ENCODE measurements at regions of chr12 and their contacts with region 1.

Region 1: GRCh38 chr12:107992870-107993451 is 136.1 kb upstream of the WSCD2 start:
- DNase-seq: peak; percentile 27 to 69
- ATAC-seq: peak; percentile 96 to 100
- H3K4me3 ChIP-seq: no peak overlapping the region
- H3K27ac ChIP-seq: no peak overlapping the region
- H3K4me1 ChIP-seq: no peaks in the 10 kb centered on the region
- CTCF ChIP-seq: peak; percentile 20; the same call in 2 of the 3 replicates
- EP300 ChIP-seq: no peak
- POLR2A ChIP-seq: no peak
- RAD21 ChIP-seq: peak in 1 of 2 experiments; percentile 45; a peak in 3 of 5 replicates

Region 2: GRCh38 chr12:107163413-107163812 is 829.5 kb before region 1 on chr12:
- CTCF ChIA-PET with region 1: no interaction called
- POLR2A ChIA-PET with region 1: no interaction called
- DNase-seq: no peak
- ATAC-seq: no peak
- H3K4me3 ChIP-seq: no peak overlapping the region
- H3K27ac ChIP-seq: no peak overlapping the region
- H3K4me1 ChIP-seq: 0 out of 3 replicates have a peak, but pooled peaks cover 6% of the 10 kb centered on the region
- CTCF ChIP-seq: no peak
- EP300 ChIP-seq: no peak
- POLR2A ChIP-seq: no peak
- RAD21 ChIP-seq: no peak

Region 3: GRCh38 chr12:107859367-107859766 is 133.6 kb before region 1 on chr12:
- CTCF ChIA-PET with region 1: no interaction called
- POLR2A ChIA-PET with region 1: no interaction called
- DNase-seq: no peak
- ATAC-seq: no peak
- H3K4me3 ChIP-seq: no peak overlapping the region
- H3K27ac ChIP-seq: no peak overlapping the region
- H3K4me1 ChIP-seq: no peaks in the 10 kb centered on the region
- CTCF ChIP-seq: no peak
- EP300 ChIP-seq: no peak
- POLR2A ChIP-seq: no peak
- RAD21 ChIP-seq: no peak

Region 4: GRCh38 chr12:107967170-107967569 is 25.8 kb before region 1 on chr12:
- CTCF ChIA-PET with region 1: interaction called, 13 read pairs
- POLR2A ChIA-PET with region 1: no interaction called
- DNase-seq: peak in 1 of 2 experiments; percentile 14
- ATAC-seq: no peak; a peak in 1 of 6 replicates
- H3K4me3 ChIP-seq: no peak overlapping the region
- H3K27ac ChIP-seq: no peak overlapping the region
- H3K4me1 ChIP-seq: no peaks in the 10 kb centered on the region
- CTCF ChIP-seq: no peak
- EP300 ChIP-seq: no peak
- POLR2A ChIP-seq: no peak
- RAD21 ChIP-seq: no peak

Region 5: DNA sequence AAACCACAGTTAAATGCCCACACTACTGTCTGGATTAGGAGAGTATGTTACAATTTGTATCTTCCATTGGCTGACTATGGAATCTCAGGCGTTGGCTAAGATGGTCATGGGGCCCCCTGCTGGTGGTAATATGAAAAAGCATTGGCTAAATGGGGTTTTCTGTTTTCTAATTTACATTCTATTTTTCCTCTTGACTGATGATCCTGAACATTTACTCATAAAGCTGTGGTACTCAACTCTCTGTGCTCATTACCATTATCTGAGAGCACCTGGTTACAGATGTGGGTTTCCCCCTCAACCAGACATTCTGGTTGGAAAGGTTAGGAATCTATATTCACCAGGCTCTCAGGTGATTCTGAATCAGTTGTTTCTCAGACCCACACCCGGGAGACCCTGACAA is 201.0 kb after region 1 on chr12:
- CTCF ChIA-PET with region 1: interaction called, 34 read pairs
- POLR2A ChIA-PET with region 1: no interaction called
- DNase-seq: peak; percentile 39 to 65
- ATAC-seq: peak in 1 of 2 experiments; percentile 56; a peak in 2 of 6 replicates
- H3K4me3 ChIP-seq: no peak overlapping the region
- H3K27ac ChIP-seq: no peak overlapping the region
- H3K4me1 ChIP-seq: no peaks in the 10 kb centered on the region
- CTCF ChIP-seq: peak; percentile 64
- EP300 ChIP-seq: no peak
- POLR2A ChIP-seq: no peak
- RAD21 ChIP-seq: peak; percentile 57 to 71

Region 6: DNA sequence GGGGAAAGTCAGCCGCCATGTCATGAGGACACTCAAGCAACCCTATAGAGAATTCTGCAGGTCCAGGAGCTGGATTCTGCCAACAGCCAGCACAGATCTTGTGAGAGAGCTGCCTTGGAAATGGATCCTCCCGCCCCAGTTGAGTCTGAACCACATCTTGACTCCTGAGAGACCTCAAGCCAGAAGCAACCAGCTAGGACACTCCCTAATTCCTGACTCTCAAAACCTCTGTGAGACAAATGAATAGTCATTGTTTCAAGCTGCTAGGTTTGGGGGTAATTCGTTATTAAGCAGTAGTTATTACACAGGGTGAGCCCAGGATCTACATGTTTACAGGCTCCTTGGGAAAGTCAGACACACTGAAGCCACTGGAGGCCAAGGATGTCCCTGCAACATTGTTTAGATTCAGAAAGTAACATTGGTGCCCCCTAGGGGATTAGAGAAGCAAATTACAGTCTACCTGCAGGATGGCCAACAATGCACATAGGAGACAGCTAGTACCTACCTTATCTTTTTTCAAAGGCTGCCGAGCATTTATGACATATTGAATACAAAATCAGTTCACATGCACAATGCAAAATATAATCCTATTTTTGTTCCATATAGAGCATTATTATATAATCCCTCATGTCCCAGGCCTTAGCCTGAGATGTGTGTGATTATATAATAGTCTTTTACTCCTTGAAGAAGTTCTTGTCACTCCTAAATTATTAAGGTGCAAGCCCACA is 464.2 kb after region 1 on chr12:
- CTCF ChIA-PET with region 1: interaction called, 18 read pairs
- POLR2A ChIA-PET with region 1: no interaction called
- DNase-seq: peak; percentile 68 to 71
- ATAC-seq: peak; percentile 77 to 97
- H3K4me3 ChIP-seq: no peak overlapping the region
- H3K27ac ChIP-seq: no peak overlapping the region
- H3K4me1 ChIP-seq: no peaks in the 10 kb centered on the region
- CTCF ChIP-seq: peak; percentile 58
- EP300 ChIP-seq: no peak
- POLR2A ChIP-seq: no peak
- RAD21 ChIP-seq: peak; percentile 56 to 74

Region 7: GRCh38 chr12:108495054-108495453 is 502.1 kb after region 1 on chr12:
- CTCF ChIA-PET with region 1: interaction called, 21 read pairs
- POLR2A ChIA-PET with region 1: no interaction called
- DNase-seq: peak; percentile 55 to 59
- ATAC-seq: peak; percentile 48 to 89; a peak in 4 of 6 replicates
- H3K4me3 ChIP-seq: no peak overlapping the region
- H3K27ac ChIP-seq: no peak overlapping the region
- H3K4me1 ChIP-seq: no peaks in the 10 kb centered on the region
- CTCF ChIP-seq: peak; percentile 45
- EP300 ChIP-seq: no peak
- POLR2A ChIP-seq: no peak
- RAD21 ChIP-seq: peak; percentile 43 to 73; a peak in 4 of 5 replicates